ENCODE measurements at regions of chr17 and their contacts with region 1.

Region 1: DNA sequence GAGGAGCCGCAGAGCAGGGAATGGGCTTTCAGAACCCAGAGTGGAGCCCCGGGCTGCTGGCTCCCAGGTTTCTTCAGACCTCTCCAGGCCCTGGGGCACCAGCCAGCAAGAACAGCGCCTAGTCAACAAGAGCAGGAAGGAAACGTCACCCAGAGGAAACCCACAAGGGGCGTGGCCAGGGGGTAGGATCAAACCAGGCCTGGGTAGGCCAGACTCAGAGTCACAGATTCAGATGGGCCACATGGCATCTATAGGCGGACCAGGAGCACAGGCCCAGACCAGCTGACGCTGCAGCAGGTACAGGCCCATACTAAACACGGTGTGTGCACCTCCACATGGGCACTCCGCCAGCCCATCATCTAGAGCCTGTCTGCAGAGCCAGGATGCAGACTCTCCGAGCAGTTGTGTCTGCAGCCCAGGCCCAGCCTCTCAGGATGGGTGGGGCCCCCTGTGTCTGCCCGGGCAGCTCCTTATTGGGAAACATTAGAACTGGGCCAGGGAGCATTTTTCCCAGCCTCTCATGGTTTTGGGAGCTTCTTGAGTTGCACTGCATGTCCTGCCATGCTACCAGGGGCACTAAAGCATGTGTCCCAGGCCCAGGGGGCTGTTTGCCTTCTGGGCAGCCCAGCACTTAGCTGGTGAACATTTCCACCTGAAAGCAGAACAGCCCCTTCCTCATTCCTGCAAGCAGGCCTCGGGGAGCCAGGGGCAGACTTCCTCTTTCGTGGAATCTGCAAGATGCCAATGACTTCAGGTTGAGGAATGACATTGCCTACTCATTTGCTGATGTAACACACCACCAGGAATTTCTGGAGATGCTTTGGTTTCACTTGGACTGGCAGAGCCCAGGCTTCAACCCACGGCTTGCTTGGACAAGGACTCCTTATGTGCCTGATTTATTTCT is at the start of gene NLRP1:
- DNase-seq: peak; percentile 98
- H3K4me3 Mint-ChIP-seq: peak within 1 kb of the TSS; percentile 72
- H3K27ac Mint-ChIP-seq: peak within 1 kb of the TSS; percentile 96
- H3K4me1 Mint-ChIP-seq: peaks cover 28% of the 10 kb centered on the region
- H3K27me3 Mint-ChIP-seq: peaks cover 10% of the 10 kb centered on the region
- CTCF ChIP-seq: no peak
- total RNA-seq, gene NLRP1: 29.0 and 33.5 TPM in 2 replicates

Region 2: GRCh38 chr17:5486204-5487124 is 98.2 kb before region 1 on chr17 and contains the start of gene MIS12:
- CTCF ChIA-PET with region 1: no interaction called
- POLR2A ChIA-PET with region 1: interaction called, 11 read pairs
- intact Hi-C with region 1: loop called (anchors 1 kb)
- DNase-seq: peak; percentile 100
- H3K4me3 Mint-ChIP-seq: peak within 1 kb of the TSS; percentile 91
- H3K27ac Mint-ChIP-seq: peak within 1 kb of the TSS; percentile 99
- H3K4me1 Mint-ChIP-seq: peaks cover 14% of the 10 kb centered on the region
- H3K27me3 Mint-ChIP-seq: no peaks in the 10 kb centered on the region
- CTCF ChIP-seq: no peak
- total RNA-seq, gene MIS12: 32.8 and 44.2 TPM in 2 replicates

Region 3: DNA sequence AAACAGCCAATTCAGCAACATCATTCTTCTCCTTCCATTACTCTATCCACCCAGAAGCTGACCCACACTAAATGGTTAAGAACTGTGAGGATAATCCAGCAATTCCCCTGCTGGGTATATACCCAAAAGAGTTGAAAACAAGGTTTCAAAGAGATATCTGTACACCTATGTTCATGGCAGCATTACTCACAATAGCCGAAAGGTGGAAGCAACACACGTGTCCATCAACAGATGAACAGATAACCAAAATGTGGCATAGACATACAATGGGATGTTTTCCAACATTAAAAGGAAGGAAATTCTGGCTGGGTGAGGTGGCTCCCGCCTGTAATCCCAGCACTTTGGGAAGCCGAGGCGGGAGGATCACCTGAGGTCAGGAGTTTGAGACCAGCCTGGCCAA is 78.3 kb before region 1 on chr17:
- CTCF ChIA-PET with region 1: interaction called, 3 read pairs
- POLR2A ChIA-PET with region 1: no interaction called
- intact Hi-C with region 1: loop called (anchors 2 kb)
- DNase-seq: no peak
- H3K4me3 Mint-ChIP-seq: no peak overlapping the region
- H3K27ac Mint-ChIP-seq: no peak overlapping the region
- H3K4me1 Mint-ChIP-seq: no peaks in the 10 kb centered on the region
- H3K27me3 Mint-ChIP-seq: no peaks in the 10 kb centered on the region
- CTCF ChIP-seq: peak; percentile 11

Region 4: DNA sequence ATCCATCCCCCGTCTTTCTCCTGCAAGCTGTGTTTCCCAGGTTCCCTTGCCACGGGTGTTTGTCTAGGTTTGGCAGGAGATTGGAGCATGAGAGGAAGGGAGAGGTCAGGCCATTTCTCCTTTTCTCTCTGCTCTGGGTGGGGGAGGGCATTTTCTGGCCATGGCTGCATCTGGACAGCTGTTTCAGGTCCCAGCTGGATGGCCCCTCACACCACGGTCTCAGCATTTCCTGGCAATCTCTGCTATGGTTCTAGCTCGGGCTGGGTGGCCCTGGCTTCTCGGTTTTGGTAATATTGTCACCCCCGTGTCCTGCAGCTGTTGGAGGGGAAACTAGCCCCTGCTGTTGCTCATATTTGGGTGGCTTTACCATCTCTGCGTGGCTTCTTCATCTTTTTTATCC is 11.2 kb after region 1 on chr17:
- CTCF ChIA-PET with region 1: no interaction called
- POLR2A ChIA-PET with region 1: no interaction called
- intact Hi-C with region 1: no loop called
- DNase-seq: no peak
- H3K4me3 Mint-ChIP-seq: no peak overlapping the region
- H3K27ac Mint-ChIP-seq: no peak overlapping the region
- H3K4me1 Mint-ChIP-seq: no peaks in the 10 kb centered on the region
- H3K27me3 Mint-ChIP-seq: peaks cover 70% of the 10 kb centered on the region
- CTCF ChIP-seq: no peak

Region 5: GRCh38 chr17:6421700-6422604 is 837.3 kb after region 1 on chr17:
- CTCF ChIA-PET with region 1: interaction called, 10 read pairs
- POLR2A ChIA-PET with region 1: interaction called, 6 read pairs
- intact Hi-C with region 1: loop called (anchors 1 kb)
- DNase-seq: peak; percentile 83
- H3K4me3 Mint-ChIP-seq: no peak overlapping the region
- H3K27ac Mint-ChIP-seq: no peak overlapping the region
- H3K4me1 Mint-ChIP-seq: no peaks in the 10 kb centered on the region
- H3K27me3 Mint-ChIP-seq: no peaks in the 10 kb centered on the region
- CTCF ChIP-seq: peak; percentile 95

Region 6: GRCh38 chr17:6435968-6436367 is 851.3 kb after region 1 on chr17:
- CTCF ChIA-PET with region 1: interaction called, 6 read pairs
- POLR2A ChIA-PET with region 1: interaction called, 3 read pairs
- intact Hi-C with region 1: loop called (anchors 1 kb)
- DNase-seq: peak; percentile 75
- H3K4me3 Mint-ChIP-seq: no peak overlapping the region
- H3K27ac Mint-ChIP-seq: no peak overlapping the region
- H3K4me1 Mint-ChIP-seq: peaks cover 6% of the 10 kb centered on the region
- H3K27me3 Mint-ChIP-seq: peaks cover 12% of the 10 kb centered on the region
- CTCF ChIP-seq: peak; percentile 70

Measured in MCF 10A (cell line).